ENCODE measurements at regions of chr9 and their contacts with region 1.

Region 1: DNA sequence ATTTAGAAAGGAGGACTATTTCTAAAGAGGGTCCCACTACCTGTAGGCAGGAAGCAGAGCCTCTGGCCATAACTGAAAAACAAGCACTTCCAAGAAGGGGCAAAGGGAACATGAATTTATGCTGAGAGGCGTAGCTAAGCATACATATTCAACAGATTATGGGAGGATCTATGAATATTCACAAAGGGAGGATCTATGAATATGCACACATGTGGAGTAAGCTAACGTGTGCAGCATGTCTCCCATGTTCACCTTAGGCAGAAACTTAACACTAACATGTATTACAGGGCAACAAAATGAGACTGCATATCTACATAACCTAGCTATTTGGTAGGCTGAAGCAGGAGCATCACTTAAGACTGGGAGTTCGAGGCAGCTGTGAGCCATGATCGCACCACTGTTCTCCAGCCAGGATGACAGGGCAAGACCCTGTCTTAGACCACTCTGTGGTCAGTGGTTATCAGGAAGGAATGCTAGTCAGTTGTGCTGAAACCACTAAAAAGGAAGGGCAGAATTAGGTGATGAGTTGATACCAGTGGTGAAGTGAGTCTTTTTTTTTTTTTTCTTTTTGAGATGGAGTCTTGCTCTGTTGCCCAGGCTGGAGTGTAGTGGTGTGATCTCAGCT is 20.8 kb downstream of the FXN start:
- DNase-seq: no peak
- H3K4me3 ChIP-seq: no peak overlapping the region
- H3K4me3 Mint-ChIP-seq: no peak overlapping the region
- H3K27ac ChIP-seq: no peak overlapping the region
- H3K27ac Mint-ChIP-seq: peak overlapping the region in 1 of 7 donors; percentile 79
- H3K4me1 ChIP-seq: no peaks in the 10 kb centered on the region
- H3K4me1 Mint-ChIP-seq: no peaks in the 10 kb centered on the region
- H3K27me3 ChIP-seq: no peaks in the 10 kb centered on the region
- H3K27me3 Mint-ChIP-seq: peaks cover 0 to 1% (median 0%) of the 10 kb centered on the region in 3 donors
- CTCF ChIP-seq: no peak

Region 2: DNA sequence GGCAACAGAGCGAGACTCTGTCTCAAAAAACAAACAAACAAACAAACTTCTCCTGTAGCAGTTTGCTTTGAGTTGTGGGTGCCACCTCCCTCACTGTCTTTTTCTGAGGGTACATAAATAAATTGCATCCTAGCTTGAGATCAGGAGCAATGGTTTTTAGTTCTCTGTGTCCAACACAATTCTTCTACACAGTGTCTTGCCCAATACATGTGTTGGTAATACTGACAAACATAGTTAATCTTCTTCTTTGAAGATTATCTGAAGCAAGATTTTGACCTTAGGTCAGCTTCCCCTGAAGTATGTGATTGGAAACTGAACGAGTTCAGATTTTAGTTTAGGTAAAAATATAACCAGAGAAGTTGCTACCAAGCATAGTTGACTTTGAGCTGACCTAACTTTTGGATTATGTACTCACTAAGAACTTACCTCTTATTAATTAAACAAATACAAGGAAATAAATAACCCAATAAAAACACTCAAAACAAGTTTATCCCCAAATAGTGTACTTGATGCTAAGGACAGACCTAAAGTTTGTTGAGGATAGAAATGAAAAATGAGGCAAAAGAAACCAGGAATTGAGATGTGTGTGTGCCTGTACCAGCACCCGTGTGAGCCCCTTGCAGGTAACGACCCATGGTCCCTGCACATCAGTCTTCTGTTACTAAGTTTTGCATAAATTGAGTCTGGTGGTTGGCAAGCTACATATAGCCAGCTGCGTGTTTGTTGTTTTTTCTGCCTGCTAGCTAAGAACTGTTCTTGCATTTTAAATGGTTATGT is 134.0 kb after region 1 on chr9:
- intact Hi-C with region 1: loop called (anchors 1 to 5 kb)
- DNase-seq: no peak
- H3K4me3 ChIP-seq: no peak overlapping the region
- H3K4me3 Mint-ChIP-seq: no peak overlapping the region
- H3K27ac ChIP-seq: no peak overlapping the region
- H3K27ac Mint-ChIP-seq: no peak overlapping the region
- H3K4me1 ChIP-seq: peaks cover 0 to 6% of the 10 kb centered on the region in 2 donors
- H3K4me1 Mint-ChIP-seq: peaks cover 12% of the 10 kb centered on the region
- H3K27me3 ChIP-seq: no peaks in the 10 kb centered on the region
- H3K27me3 Mint-ChIP-seq: no peaks in the 10 kb centered on the region
- CTCF ChIP-seq: no peak